ENCODE measurements at regions of chr17 and their contacts with region 1.

Region 1: GRCh38 chr17:74203439-74204240 is at the start of gene RPL38:
- DNase-seq: peak; percentile 92 to 99 (median 97)
- H3K4me3 ChIP-seq: peak within 1 kb of the TSS; percentile 51 to 100 (median 92)
- H3K27ac ChIP-seq: peak within 1 kb of the TSS in 58 of 59 donors; percentile 16 to 92 (median 80)
- H3K27me3 ChIP-seq: no peaks in the 10 kb centered on the region
- CTCF ChIP-seq: peak; percentile 93 to 100 (median 98)
- total RNA-seq, gene RPL38: 444 to 745 (median 535) TPM

Region 2: DNA sequence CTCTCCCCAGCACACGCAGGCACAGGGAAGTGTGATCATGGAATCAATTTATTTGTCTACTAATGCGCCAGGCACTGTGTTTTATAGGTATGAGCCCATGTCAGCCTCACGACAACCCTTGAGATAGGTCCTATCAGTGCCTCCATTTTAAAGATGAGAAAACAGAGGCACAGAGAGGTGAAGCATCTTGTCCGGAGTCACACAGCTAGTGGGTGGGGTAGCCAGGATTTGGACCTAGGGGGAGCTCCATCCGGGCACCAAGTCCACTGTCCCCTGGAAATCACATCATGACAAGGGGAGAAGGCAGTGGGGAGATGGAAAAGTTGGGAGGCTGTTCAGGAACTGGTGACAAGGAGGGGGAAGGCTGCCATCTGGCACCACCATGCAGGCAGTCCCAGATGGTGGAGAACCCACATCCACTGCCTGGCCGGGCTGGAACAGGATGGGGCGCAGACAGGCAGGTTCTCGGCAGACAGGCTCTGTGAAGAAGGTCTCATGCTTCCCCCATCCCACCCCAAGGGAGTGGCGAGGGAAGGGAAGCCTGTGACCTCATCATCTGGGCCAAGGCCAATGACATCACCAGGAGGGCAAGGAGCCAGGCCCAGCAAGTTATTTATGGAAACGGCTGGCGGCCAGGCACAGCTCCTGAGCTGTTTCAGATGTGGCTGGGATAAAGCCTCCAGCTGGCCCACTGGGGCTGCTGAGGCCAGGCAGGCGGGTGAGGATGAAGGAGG is 433.4 kb before region 1 on chr17:
- intact Hi-C with region 1: no loop called
- DNase-seq: peak; percentile 48 to 91 (median 84)
- H3K4me3 ChIP-seq: peak overlapping the region in 5 of 59 donors; percentile 1 to 32 (median 12)
- H3K27ac ChIP-seq: peak overlapping the region in 25 of 59 donors; percentile 0 to 75 (median 46)
- H3K27me3 ChIP-seq: no peaks in the 10 kb centered on the region
- CTCF ChIP-seq: peak in 6 of 56 donors; percentile 5 to 30 (median 14)

Region 3: GRCh38 chr17:74163271-74163821 is 40.3 kb before region 1 on chr17:
- intact Hi-C with region 1: no loop called
- DNase-seq: no peak
- H3K4me3 ChIP-seq: no peak overlapping the region
- H3K27ac ChIP-seq: no peak overlapping the region
- H3K27me3 ChIP-seq: peaks cover 0 to 6% (median 0%) of the 10 kb centered on the region in 45 donors
- CTCF ChIP-seq: no peak

Region 4: DNA sequence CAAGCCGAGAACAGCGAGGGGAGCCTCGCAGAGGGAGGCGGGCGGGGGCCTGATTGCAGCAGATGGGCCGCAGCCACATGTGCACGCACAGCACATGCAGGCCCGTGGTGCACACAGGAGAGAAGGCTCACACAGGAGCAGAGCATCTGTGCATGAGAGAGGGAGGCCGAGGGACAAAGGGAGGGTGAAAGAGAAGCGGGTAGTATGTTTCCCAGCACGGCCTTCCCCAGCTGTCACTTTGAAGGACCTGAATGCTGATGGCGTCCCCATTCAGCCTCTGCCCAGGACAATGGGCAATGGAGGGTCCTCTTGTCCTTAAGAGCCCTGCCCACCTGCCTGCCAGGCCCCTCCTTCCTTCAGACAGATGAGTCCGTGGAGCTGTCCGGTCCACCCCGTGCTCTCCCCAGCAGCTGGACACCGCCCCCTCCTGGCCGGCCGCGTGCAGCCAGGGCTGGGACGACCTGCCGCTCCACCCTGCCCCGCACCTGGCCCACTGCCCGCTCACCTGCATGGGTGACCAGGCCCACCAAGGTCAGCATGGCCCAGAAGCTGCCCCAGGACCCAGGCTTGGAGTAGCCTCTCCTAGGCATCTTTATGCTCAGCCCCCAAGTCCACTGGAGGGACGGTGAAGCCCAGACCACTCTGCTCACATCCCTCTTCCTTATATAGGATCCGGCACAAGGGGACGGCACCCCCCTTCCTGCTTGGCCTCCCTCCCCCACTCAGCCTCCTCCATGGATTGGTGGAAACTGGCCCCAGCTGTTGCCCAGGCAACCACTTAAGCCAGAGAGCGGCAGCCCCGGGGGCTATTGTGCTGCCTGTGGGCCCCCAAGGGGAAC is 157.8 kb after region 1 on chr17 and contains the start of gene BTBD17:
- intact Hi-C with region 1: loop called in 1 of 2 experiments (anchors 2 kb)
- DNase-seq: peak; percentile 28 to 82 (median 70)
- H3K4me3 ChIP-seq: peak within 1 kb of the TSS in 25 of 59 donors; percentile 2 to 46 (median 14)
- H3K27ac ChIP-seq: peak within 1 kb of the TSS in 49 of 59 donors; percentile 8 to 85 (median 59)
- H3K27me3 ChIP-seq: peaks cover 0 to 27% (median 7%) of the 10 kb centered on the region in 45 donors
- CTCF ChIP-seq: peak in 55 of 56 donors; percentile 58 to 95 (median 77)
- total RNA-seq, gene BTBD17: 0.28 to 6.4 (median 1.6) TPM